ENCODE measurements at regions of chr2 and their contacts with region 1.

Region 1: DNA sequence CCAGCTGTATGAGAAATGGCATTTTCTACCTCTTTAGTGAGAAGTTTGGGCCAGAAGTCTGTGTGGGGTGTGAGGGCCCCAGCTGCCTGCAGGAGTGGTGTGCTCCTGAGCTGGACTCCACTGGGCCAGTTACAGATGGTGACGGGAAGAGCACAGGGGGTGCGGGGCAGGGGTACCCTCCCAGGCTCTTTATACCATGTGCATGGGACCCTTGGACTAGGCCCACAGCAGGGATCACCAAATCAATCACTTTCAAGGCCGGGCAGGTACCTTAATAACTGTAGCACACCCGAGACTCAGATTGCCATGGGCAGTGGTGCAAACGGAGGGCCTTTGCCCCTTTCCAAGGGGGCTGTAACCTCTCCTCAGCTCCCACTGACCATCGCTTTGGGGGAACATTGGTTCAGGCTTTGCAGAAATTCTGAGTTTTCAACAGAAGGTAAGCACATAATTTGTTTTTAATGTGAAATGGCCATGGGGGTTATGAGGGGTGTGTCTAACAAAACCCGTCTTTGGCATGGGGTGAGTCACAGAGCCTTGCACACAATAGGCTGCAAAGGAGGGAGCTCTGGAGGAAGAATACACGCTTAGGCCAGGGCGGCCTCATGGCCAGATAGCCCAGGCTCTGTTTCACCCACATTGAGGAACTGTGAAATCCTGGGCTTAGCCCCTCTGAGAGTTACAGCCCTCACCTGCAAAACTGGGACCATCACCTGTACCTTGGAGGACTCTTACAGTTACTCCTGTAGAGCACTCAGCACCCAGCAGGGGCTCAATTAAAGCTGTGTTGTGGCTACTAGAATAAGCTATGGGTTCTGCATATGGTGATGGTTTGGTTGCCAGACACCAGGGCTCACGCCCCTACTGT is 141.0 kb upstream of the BCL2L11 start:
- DNase-seq: no peak
- ATAC-seq: no peak; the same call in 2 of the 3 replicates
- H3K4me3 ChIP-seq: no peak overlapping the region
- H3K27ac ChIP-seq: no peak overlapping the region
- H3K4me1 ChIP-seq: no peaks in the 10 kb centered on the region
- H3K27me3 ChIP-seq: peaks cover 0 to 2% of the 10 kb centered on the region in 2 experiments; a peak in 3 of 4 replicates
- CTCF ChIP-seq: no peak
- EP300 ChIP-seq: no peak
- POLR2A ChIP-seq: no peak
- RAD21 ChIP-seq: no peak

Region 2: DNA sequence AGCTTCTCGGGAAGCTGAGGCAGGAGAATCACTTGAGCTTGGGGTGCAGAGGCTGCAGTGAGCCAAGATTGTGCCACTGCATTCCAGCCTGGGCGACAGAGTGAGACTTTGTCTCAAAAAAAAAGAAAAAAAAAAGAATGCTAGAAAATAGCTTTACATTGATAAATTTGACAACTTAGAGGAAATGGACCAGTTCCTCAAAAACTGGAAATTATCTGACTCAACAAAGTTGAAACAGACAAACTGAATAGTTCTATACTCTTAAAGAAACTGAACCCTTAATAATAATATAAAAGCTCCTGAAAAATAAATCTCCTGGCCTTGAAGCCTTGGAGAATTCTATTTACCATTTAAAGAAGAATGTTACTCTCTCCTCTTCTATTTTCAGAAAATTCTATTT is 10.0 kb before region 1 on chr2:
- CTCF ChIA-PET with region 1: interaction called, 3 read pairs
- POLR2A ChIA-PET with region 1: interaction called, 4 read pairs
- RAD21 ChIA-PET with region 1: no interaction called
- SMC1A ChIA-PET with region 1: interaction called, 10 read pairs
- in situ Hi-C with region 1: no loop called
- intact Hi-C with region 1: no loop called
- DNase-seq: no peak
- ATAC-seq: no peak
- H3K4me3 ChIP-seq: no peak overlapping the region
- H3K27ac ChIP-seq: no peak overlapping the region
- H3K4me1 ChIP-seq: no peaks in the 10 kb centered on the region
- H3K27me3 ChIP-seq: no peaks in the 10 kb centered on the region; a peak in 1 of 4 replicates
- CTCF ChIP-seq: no peak
- EP300 ChIP-seq: no peak
- POLR2A ChIP-seq: no peak
- RAD21 ChIP-seq: no peak

Region 3: DNA sequence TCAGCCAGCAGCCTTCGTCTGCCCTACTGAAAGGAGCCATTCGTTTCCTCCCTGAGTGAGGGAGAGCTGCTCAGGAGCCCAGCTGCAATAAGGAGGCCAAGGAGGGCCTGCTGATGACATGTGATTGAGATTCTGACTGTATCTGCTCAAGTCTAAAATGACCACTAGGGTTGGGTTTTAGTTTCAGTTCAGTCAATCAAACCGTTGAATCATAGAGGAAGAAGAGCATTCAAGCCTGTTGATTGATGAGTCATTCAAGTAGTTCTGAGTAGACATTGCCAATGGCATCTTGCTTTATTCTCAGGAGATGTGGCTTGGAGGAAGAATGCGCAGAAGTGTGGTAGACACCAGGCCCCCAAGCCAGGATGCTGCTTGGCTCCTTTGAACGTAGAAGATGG is 121.1 kb after region 1 on chr2:
- CTCF ChIA-PET with region 1: no interaction called
- POLR2A ChIA-PET with region 1: no interaction called
- RAD21 ChIA-PET with region 1: no interaction called
- SMC1A ChIA-PET with region 1: no interaction called
- in situ Hi-C with region 1: no loop called
- intact Hi-C with region 1: no loop called
- DNase-seq: peak; percentile 78
- ATAC-seq: peak; percentile 96
- H3K4me3 ChIP-seq: no peak overlapping the region
- H3K27ac ChIP-seq: no peak overlapping the region
- H3K4me1 ChIP-seq: peaks cover 9% of the 10 kb centered on the region
- H3K27me3 ChIP-seq: no peaks in the 10 kb centered on the region
- CTCF ChIP-seq: peak in 2 of 3 experiments; percentile 11 to 21; a peak in 2 of 6 replicates
- EP300 ChIP-seq: peak; percentile 70 to 75; a peak in 3 of 4 replicates
- POLR2A ChIP-seq: no peak
- RAD21 ChIP-seq: no peak

Measured in GM12878 (cell line).